ENCODE measurements at regions of chr17 and their contacts with region 1.

Region 1: GRCh38 chr17:19992803-19993713 is 15.4 kb upstream of the AKAP10 start:
- DNase-seq: peak; percentile 92 to 95
- ATAC-seq: peak; percentile 97
- H3K4me3 ChIP-seq: no peak overlapping the region
- H3K27ac ChIP-seq: no peak overlapping the region
- H3K4me1 ChIP-seq: no peaks in the 10 kb centered on the region
- H3K27me3 ChIP-seq: no peaks in the 10 kb centered on the region

Region 2: DNA sequence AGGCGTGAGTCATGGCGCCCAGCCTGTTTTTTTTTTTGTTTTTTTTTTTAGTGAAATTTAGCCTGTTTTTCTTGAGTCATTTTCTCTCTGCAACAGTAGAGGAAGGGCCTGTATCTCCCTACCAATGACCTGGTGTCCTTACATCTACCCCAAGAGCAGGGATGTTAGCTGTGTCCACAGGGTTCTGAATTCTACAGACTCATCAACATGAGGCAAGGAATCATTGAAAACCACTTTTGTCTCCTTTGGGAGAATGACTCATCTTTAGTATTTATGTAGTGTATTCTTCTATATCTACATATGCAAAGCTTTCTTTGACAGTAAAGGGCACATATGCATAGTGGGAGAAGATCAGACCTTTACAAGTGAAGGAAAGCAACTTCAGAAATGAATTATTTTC is 121.4 kb after region 1 on chr17:
- intact Hi-C with region 1: loop called (anchors 2 kb)
- DNase-seq: no peak
- ATAC-seq: no peak
- H3K4me3 ChIP-seq: no peak overlapping the region
- H3K27ac ChIP-seq: no peak overlapping the region
- H3K4me1 ChIP-seq: no peaks in the 10 kb centered on the region
- H3K27me3 ChIP-seq: no peaks in the 10 kb centered on the region

Region 3: GRCh38 chr17:20121359-20122253 is 128.5 kb after region 1 on chr17:
- intact Hi-C with region 1: loop called in 1 of 2 experiments (anchors 2 kb)
- DNase-seq: peak; percentile 77 to 82
- ATAC-seq: peak; percentile 73
- H3K4me3 ChIP-seq: no peak overlapping the region
- H3K27ac ChIP-seq: peak overlapping the region in 1 of 2 donors; percentile 48
- H3K4me1 ChIP-seq: no peaks in the 10 kb centered on the region
- H3K27me3 ChIP-seq: no peaks in the 10 kb centered on the region

Region 4: GRCh38 chr17:20226814-20227482 is 233.9 kb after region 1 on chr17:
- intact Hi-C with region 1: loop called (anchors 5 kb)
- DNase-seq: peak; percentile 90 to 95
- ATAC-seq: peak; percentile 95
- H3K4me3 ChIP-seq: no peak overlapping the region
- H3K27ac ChIP-seq: peak overlapping the region; percentile 18 to 64
- H3K4me1 ChIP-seq: peaks cover 5 to 6% of the 10 kb centered on the region in 2 donors
- H3K27me3 ChIP-seq: no peaks in the 10 kb centered on the region

Region 5: DNA sequence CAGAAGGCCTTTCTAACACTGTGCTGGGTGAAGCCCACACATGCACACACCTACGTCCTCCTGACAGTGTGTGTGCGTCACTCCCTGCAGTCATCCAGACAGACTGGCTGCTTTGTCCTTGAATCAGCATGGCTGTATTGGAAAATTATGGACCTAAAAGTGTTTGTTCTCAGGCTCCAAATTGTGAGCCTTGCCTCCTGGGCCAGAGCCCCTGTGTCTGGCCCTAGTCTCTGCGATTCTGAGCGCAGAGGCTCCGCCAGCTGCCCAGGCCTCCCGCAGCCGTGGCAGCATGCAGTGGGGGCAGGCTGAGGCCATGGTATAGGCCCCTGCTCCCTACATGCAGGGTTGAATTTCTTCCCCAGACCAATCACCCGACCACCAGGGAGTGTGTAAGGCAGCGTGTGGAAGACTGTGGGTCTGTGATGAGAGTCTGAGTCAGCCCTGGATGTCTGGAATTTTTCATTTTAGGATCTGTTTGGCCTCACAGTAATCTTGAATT is 307.4 kb after region 1 on chr17:
- intact Hi-C with region 1: loop called in 1 of 2 experiments (anchors 10 kb)
- DNase-seq: no peak
- ATAC-seq: no peak
- H3K4me3 ChIP-seq: no peak overlapping the region
- H3K27ac ChIP-seq: peak overlapping the region; percentile 8 to 30
- H3K4me1 ChIP-seq: no peaks in the 10 kb centered on the region
- H3K27me3 ChIP-seq: no peaks in the 10 kb centered on the region